Panc1 (cell line): ENCODE measurements at regions of chr14 and their contacts with region 1.

Region 1: DNA sequence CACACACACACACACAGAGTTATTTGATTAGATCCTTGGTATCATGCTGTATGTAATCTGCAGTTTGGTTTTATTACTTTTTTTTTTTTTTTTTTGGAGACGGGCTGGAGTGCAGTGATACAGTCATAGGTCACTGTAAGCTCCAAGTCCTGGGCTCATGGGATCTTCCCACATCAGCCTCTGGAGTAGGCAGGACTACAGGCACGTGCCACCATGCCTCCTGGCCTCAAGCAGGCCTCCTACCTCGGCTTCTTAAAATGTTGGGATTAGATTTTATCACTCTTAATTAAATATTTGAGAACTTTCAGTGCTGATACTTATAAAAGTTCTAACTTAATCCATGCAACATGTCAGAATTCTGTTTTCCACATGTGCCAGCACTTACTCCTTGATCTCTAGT is 31.3 kb upstream of the PSEN1 start:
- DNase-seq: no peak
- ATAC-seq: no peak
- H3K4me3 ChIP-seq: no peak overlapping the region
- H3K27ac ChIP-seq: no peak overlapping the region
- H3K4me1 ChIP-seq: no peaks in the 10 kb centered on the region
- H3K27me3 ChIP-seq: no peaks in the 10 kb centered on the region
- CTCF ChIP-seq: no peak

Region 2: DNA sequence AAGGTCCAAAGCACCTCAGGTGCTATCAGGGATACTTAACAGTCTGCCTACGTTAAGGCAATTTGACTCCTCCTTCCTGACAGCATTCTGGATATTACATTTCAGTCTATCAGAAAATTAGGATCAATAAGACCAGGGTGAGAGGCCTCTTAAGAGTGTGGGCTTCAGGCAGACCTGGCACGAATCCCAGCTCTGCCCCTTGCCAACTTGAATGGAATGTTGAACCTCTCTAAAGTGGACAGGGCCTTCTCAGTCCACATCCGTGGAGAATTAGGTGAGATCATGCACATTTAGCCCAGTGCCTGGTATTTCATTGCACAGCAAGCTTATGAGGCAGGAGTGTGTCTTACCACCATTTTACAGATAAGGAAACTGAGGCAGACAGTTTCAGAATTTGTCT is 152.9 kb before region 1 on chr14:
- CTCF ChIA-PET with region 1: no interaction called
- POLR2A ChIA-PET with region 1: no interaction called
- in situ Hi-C with region 1: no loop called
- intact Hi-C with region 1: no loop called
- DNase-seq: no peak
- ATAC-seq: no peak
- H3K4me3 ChIP-seq: no peak overlapping the region
- H3K27ac ChIP-seq: no peak overlapping the region
- H3K4me1 ChIP-seq: no peaks in the 10 kb centered on the region
- H3K27me3 ChIP-seq: no peaks in the 10 kb centered on the region
- CTCF ChIP-seq: no peak

Region 3: GRCh38 chr14:73211251-73212040 is 106.4 kb after region 1 on chr14:
- CTCF ChIA-PET with region 1: no interaction called
- POLR2A ChIA-PET with region 1: no interaction called
- in situ Hi-C with region 1: no loop called
- intact Hi-C with region 1: no loop called
- DNase-seq: no peak
- ATAC-seq: no peak
- H3K4me3 ChIP-seq: no peak overlapping the region
- H3K27ac ChIP-seq: no peak overlapping the region
- H3K4me1 ChIP-seq: no peaks in the 10 kb centered on the region
- H3K27me3 ChIP-seq: no peaks in the 10 kb centered on the region
- CTCF ChIP-seq: no peak

Region 4: DNA sequence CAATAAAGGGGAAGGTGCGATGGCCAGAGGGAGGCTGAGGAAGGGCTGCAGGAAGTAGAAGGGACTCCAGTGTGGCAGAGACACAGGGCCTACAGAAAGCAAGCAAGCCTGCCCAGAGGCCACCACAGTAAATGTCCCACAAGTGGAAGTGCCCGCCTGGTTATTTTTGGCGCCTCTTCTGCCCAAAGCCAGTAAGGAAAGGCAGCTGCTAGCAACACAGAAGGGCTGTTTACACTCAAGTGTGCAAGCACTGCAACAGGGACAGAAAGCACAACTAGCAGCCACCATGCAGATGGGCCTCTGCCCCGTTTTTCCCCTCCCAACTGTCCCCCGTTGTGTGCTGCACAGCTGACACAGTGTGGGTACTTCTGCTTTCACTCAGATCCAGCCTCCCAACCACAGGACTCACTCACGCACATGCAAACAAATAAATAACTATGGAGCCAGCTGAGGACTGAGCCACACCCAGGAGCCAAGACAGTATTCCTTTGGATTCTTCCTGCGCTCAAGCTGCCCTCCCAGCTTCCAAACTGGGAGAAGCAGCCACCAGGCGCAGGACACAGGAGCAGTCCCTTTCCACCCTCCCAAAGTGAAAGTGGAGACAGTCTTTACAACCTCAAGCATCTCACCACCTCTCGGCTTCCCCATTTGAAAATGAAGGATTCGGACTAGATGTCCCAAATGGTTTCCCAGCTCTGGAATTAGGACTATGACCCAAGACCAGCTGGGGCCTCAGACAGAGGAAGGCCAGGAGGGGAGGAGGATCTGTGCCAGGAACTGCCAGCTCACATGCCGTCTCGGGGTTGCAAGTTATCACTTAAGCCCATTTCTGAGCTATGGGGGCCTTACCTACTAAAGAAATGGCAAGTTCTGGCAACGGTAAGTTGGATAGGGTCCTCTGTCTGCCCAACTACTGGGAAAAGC is 649.2 kb after region 1 on chr14:
- CTCF ChIA-PET with region 1: no interaction called
- POLR2A ChIA-PET with region 1: interaction called, 15 read pairs
- in situ Hi-C with region 1: no loop called
- intact Hi-C with region 1: no loop called
- DNase-seq: no peak
- ATAC-seq: peak; percentile 13
- H3K4me3 ChIP-seq: peak overlapping the region; percentile 16 to 85; a peak in 3 of 4 replicates
- H3K27ac ChIP-seq: peak overlapping the region; percentile 97
- H3K4me1 ChIP-seq: peaks cover 86% of the 10 kb centered on the region
- H3K27me3 ChIP-seq: no peaks in the 10 kb centered on the region
- CTCF ChIP-seq: no peak